Posterior cingulate gyrus (tissue), 11 donors: ENCODE measurements at regions of chr10 and their contacts with region 1.

Region 1: DNA sequence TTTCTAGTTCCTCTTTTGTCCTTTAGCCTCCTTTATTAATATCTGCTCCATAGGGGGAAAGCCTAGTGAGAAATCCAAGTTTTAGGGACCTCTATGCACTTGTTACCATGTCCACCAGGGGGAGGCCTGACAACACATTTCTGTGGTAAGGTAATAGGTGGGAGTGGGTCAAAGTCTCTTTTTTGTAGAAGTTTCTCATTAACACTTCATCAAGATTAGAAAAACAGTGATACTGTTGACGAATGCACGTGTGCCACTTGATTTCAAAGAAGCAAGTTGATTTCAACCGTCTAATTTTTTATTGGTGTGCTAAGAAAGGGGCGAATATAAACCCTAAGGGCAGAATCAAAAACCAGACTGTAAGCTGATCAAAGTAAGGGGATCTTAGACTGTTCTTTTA is 30.6 kb downstream of the CISD1 start:
- DNase-seq: peak in 5 of 10 donors; percentile 23 to 56 (median 50)

Region 2: DNA sequence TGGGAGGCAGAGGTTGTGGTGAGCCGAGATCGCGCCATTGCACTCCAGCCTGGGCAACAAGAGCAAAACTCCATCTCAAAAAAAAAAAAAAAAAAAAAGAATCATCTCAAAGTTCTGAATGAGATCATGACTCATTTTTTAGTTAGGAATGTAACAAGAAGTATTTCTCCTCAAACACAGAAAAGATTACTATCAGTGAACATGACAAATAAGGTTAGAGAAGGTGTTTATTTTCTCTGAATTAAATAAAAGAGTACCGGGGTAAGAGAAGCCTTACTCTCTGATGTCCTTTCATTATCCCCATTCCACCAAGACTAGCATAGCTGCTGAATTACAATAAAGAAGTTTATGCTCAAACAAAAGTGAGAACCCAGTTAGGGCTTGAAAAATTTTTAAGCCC is 82.0 kb before region 1 on chr10:
- intact Hi-C with region 1: no loop called
- DNase-seq: no peak

Region 3: GRCh38 chr10:58239561-58240169 is 59.9 kb before region 1 on chr10:
- intact Hi-C with region 1: no loop called
- DNase-seq: no peak

Region 4: GRCh38 chr10:58268870-58269605 is 30.5 kb before region 1 on chr10 and contains the start of gene CISD1:
- intact Hi-C with region 1: no loop called
- DNase-seq: peak; percentile 89 to 98 (median 92)

Region 5: GRCh38 chr10:58360391-58361004 is 60.9 kb after region 1 on chr10:
- intact Hi-C with region 1: no loop called
- DNase-seq: no peak

Region 6: DNA sequence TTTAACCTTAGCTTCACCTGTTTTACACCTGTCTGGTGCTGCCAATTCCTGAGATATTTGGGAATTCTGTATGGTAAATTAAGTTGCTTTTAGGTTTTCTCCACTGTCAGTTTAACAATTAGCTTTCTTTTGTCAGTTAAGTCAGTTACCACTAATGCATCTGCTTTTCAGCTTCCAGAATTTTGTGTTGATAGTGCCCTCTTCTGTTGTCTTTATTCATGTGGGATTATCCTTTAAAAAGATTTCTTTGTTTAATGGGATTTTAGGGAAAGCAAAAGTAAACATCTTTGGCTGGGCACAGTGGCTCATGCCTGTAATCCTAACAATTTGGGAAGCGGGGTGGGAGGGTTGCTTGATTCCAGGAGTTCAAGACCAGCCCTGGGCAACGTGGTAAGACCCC is 93.7 kb after region 1 on chr10:
- intact Hi-C with region 1: loop called (anchors 2 kb)
- DNase-seq: no peak